ENCODE measurements at regions of chr17 and their contacts with region 1.

Region 1: DNA sequence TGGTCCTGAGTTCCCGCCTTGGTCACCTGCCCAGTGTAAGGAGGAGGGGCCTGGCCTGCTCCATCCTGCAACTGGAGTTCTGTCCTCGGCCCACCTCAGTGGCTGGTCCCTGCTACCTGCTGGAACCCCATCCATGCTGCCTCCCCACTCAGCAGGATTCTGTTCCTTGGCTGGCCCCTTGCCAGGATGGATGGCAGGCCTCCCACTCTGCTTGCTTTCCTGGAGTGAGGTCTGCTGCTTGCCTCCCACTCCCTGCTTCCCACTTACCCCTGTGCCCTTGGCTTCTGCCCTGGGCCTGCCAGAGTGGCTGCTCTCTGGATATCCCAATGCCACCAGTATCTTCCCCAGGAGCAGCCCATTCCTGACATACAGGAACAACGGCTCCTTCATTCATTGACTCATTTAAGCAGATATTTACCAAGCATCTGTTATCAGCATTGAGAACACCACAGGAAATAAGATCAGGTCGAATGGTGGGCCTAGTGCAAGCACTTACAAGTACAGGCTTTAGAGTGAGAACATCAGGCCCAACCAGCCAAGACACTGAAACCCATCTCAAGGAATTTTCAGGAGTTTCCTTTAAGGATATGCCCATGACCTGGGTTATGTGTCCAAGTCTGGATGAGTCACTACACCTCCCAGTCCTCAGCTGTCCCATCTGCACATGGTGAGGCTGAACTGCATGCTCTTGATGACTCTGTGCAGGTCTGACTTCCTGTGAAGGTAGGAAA is 17.0 kb upstream of the RPRML start:
- DNase-seq: no peak
- H3K4me3 Mint-ChIP-seq: no peak overlapping the region
- H3K27ac Mint-ChIP-seq: no peak overlapping the region
- H3K4me1 Mint-ChIP-seq: no peaks in the 10 kb centered on the region
- H3K27me3 Mint-ChIP-seq: no peaks in the 10 kb centered on the region

Region 2: DNA sequence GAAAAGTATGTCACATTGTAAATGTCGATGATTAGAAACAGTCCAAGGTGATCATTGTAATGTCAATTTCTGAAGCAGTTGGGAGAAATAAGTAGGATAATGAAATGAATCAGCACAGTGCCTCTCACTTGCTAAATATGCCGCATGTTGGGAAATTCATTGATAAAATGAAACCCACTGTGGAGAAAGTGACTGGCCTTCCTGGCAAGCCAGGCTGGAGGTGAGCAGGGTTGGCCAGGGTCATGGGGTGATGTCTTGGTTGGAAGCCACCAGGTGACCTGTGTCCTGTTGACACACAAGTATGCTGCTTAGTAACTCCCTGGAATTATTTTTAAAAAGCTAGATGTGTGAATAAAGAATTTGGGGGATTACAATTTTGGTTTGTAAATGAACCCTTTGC is 159.5 kb before region 1 on chr17:
- CTCF ChIA-PET with region 1: interaction called, 5 read pairs
- POLR2A ChIA-PET with region 1: no interaction called
- intact Hi-C with region 1: loop called (anchors 1 kb)
- DNase-seq: no peak
- H3K4me3 Mint-ChIP-seq: no peak overlapping the region
- H3K27ac Mint-ChIP-seq: no peak overlapping the region
- H3K4me1 Mint-ChIP-seq: peaks cover 10% of the 10 kb centered on the region
- H3K27me3 Mint-ChIP-seq: peaks cover 26% of the 10 kb centered on the region

Region 3: GRCh38 chr17:47009759-47010594 is 14.0 kb after region 1 on chr17:
- CTCF ChIA-PET with region 1: no interaction called
- POLR2A ChIA-PET with region 1: no interaction called
- intact Hi-C with region 1: no loop called
- DNase-seq: no peak
- H3K4me3 Mint-ChIP-seq: no peak overlapping the region
- H3K27ac Mint-ChIP-seq: no peak overlapping the region
- H3K4me1 Mint-ChIP-seq: peaks cover 9% of the 10 kb centered on the region
- H3K27me3 Mint-ChIP-seq: no peaks in the 10 kb centered on the region

Measured in activated CD4-positive, alpha-beta memory T cell treated with anti-CD3 and anti-CD28 coated beads for 36 hours (primary cell).